Left cardiac atrium (tissue), 4 donors: ENCODE measurements at regions of chr6 and their contacts with region 1.

Region 1: GRCh38 chr6:108904741-108905140 is 56.5 kb downstream of the ARMC2 start:
- DNase-seq: no peak
- ATAC-seq: no peak

Region 2: DNA sequence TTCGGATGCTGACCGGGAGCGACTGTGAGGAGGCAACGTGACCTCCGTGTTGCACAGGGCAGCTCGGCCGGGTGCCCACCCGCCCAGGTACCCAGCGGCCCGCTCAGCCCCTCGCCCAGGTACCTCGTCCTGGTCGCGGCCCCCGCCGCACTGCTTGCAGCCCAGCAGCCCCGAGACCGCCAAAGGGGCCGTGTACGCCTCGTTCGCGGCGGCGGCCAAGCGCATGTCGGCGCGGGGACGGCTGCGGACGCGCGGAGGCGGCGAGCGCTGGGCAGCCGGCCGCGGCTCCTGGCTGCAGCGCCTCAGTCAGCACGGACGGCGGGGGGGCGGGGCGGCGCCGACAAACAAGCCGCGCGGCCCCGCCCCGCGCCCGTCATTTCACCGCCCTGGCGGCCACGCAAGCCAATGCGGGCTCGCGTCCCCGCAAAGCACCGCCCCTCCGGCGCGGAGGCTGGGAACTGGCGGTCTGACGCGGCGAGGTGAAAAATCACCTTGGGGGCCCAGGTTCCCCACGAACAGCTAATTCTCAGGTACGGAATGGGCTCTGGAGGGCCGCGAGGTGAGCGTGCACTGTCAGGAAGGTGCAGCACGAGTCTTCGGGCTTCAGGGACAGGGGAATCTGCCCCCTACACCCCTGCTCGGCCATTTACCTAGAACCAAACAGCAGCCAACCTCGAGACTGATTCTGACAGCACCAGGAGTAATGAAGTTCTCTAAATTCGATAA is 104.7 kb after region 1 on chr6:
- intact Hi-C with region 1: loop called in 1 of 2 experiments (anchors 5 kb)
- DNase-seq: peak; percentile 97
- ATAC-seq: peak; percentile 98 to 99